IMR-90 (cell line): ENCODE measurements at regions of chr4 and their contacts with region 1.

Region 1: GRCh38 chr4:12595986-12596385 is 888.2 kb downstream of the RAB28 start:
- DNase-seq: no peak
- ATAC-seq: no peak
- H3K4me3 ChIP-seq: no peak overlapping the region
- H3K27ac ChIP-seq: no peak overlapping the region
- H3K4me1 ChIP-seq: no peaks in the 10 kb centered on the region
- H3K27me3 ChIP-seq: no peaks in the 10 kb centered on the region
- CTCF ChIP-seq: no peak
- POLR2A ChIP-seq: no peak
- RAD21 ChIP-seq: no peak

Region 2: GRCh38 chr4:12692815-12693214 is 96.8 kb after region 1 on chr4:
- CTCF ChIA-PET with region 1: no interaction called
- POLR2A ChIA-PET with region 1: no interaction called
- dilution Hi-C with region 1: no loop called
- in situ Hi-C with region 1: no loop called
- intact Hi-C with region 1: no loop called
- DNase-seq: no peak
- ATAC-seq: no peak
- H3K4me3 ChIP-seq: no peak overlapping the region
- H3K27ac ChIP-seq: no peak overlapping the region
- H3K4me1 ChIP-seq: no peaks in the 10 kb centered on the region
- H3K27me3 ChIP-seq: no peaks in the 10 kb centered on the region
- CTCF ChIP-seq: no peak
- POLR2A ChIP-seq: no peak
- RAD21 ChIP-seq: no peak

Region 3: GRCh38 chr4:13511101-13511500 is 915.1 kb after region 1 on chr4:
- CTCF ChIA-PET with region 1: no interaction called
- POLR2A ChIA-PET with region 1: no interaction called
- dilution Hi-C with region 1: no loop called
- in situ Hi-C with region 1: no loop called
- intact Hi-C with region 1: loop called (anchors 10 kb)
- DNase-seq: no peak
- ATAC-seq: no peak
- H3K4me3 ChIP-seq: no peak overlapping the region
- H3K27ac ChIP-seq: no peak overlapping the region
- H3K4me1 ChIP-seq: no peaks in the 10 kb centered on the region
- H3K27me3 ChIP-seq: no peaks in the 10 kb centered on the region; the same call in none of the 2 replicates
- CTCF ChIP-seq: no peak
- POLR2A ChIP-seq: no peak
- RAD21 ChIP-seq: no peak